Left ventricle myocardium inferior (tissue), 1 donor: ENCODE measurements at regions of chr16 and their contacts with region 1.

Region 1: DNA sequence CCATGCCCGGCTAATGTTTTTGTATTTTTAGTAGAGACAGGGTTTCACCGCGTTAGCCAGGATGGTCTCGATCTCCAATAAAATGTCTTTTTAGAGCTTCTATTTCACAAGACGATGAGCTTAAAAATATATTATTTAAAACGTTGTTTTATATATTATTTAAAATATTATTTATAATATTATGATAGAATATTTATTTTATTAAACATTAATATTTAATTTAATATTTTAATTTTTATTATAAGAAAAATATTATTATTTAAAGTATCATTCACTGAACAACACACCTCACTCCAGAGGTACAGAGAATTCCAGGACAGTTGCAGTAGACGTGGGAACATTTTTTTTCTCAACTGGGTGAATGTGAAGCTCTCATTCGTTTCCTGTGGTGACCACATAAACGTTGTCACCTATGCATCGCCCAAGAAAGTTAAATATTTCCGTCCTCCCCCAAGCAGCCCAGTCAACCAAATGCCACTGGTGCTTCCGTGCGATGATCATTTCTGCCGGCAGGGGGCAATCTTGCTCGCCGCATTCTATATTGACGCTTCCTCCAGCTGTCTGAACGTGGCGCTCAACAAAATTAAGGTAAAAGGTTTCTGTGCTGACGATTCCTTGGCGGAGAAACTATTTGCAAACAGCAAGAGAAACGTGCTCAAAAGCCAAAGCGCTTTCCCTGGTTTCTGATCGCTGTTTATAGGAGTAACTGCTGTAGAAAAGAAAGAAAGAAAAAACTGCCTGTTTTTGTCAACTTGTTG is 41.7 kb upstream of the PRSS54 start:
- DNase-seq: peak; percentile 84
- H3K4me3 ChIP-seq: peak overlapping the region; percentile 51
- H3K27ac ChIP-seq: peak overlapping the region; percentile 78
- H3K4me1 ChIP-seq: peaks cover 41% of the 10 kb centered on the region
- H3K27me3 ChIP-seq: no peaks in the 10 kb centered on the region
- CTCF ChIP-seq: peak; percentile 95

Region 2: DNA sequence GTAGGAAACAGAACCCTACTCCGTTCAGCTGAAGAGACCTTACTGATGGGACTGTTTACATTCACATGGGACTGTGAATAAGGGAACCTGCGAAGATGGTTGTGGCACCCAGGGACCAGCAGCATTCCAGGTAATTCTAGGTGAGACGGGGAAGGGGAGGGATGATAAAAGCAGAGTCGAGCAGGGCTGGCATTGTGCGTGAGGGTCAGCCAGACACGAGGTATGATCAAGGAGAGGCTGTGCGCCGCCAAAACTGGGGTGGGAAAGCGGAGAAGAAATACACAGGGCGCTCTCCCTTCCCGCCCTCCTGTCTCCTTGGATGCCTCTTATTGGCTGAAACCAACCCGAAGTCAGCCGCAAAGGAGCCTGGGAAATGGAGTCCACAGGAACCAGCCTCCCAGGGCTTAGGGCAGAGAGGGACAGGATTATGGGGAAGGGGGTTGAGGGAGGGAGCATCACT is 100.2 kb before region 1 on chr16:
- intact Hi-C with region 1: no loop called
- DNase-seq: peak; percentile 61
- H3K4me3 ChIP-seq: peak overlapping the region; percentile 63
- H3K27ac ChIP-seq: no peak overlapping the region
- H3K4me1 ChIP-seq: peaks cover 8% of the 10 kb centered on the region
- H3K27me3 ChIP-seq: peaks cover 26% of the 10 kb centered on the region
- CTCF ChIP-seq: no peak

Region 3: GRCh38 chr16:58487566-58488351 is 151.2 kb after region 1 on chr16:
- intact Hi-C with region 1: loop called (anchors 5 kb)
- DNase-seq: peak; percentile 88
- H3K4me3 ChIP-seq: peak overlapping the region; percentile 47
- H3K27ac ChIP-seq: peak overlapping the region; percentile 86
- H3K4me1 ChIP-seq: peaks cover 66% of the 10 kb centered on the region
- H3K27me3 ChIP-seq: no peaks in the 10 kb centered on the region
- CTCF ChIP-seq: peak; percentile 95

Region 4: DNA sequence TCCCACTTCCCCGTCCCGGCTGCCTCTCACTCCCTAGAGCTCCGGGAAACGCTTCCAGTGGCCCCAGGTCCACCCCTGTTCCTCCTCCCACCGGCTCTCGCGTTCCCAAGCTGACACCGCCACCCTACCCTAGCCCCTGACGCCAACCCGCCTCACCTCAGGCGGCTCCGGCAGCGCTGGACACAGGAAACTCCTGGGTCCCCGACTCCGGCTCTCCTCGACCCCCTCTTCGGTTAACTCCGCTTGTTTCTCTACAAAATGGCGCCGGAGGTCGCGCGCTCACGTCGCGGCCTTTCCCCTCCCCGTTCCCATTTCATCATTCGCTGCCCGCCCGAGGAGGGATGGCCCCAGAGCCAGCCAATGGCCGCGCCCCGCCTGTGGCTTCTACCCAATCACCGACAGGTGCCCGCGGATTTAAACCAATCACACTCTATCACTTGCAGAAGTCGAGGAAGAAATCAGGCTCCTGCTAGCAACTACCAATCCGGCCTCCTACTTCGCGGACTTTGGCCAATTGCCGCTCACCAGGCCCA is 293.1 kb after region 1 on chr16 and contains the start of gene CNOT1:
- intact Hi-C with region 1: loop called (anchors 10 kb)
- DNase-seq: peak; percentile 98
- H3K4me3 ChIP-seq: peak within 1 kb of the TSS; percentile 99
- H3K27ac ChIP-seq: peak within 1 kb of the TSS; percentile 99
- H3K4me1 ChIP-seq: peaks cover 48% of the 10 kb centered on the region
- H3K27me3 ChIP-seq: no peaks in the 10 kb centered on the region
- CTCF ChIP-seq: no peak
- total RNA-seq, gene CNOT1: 64.1 TPM